ENCODE measurements at regions of chr14 and their contacts with region 1.

Region 1: DNA sequence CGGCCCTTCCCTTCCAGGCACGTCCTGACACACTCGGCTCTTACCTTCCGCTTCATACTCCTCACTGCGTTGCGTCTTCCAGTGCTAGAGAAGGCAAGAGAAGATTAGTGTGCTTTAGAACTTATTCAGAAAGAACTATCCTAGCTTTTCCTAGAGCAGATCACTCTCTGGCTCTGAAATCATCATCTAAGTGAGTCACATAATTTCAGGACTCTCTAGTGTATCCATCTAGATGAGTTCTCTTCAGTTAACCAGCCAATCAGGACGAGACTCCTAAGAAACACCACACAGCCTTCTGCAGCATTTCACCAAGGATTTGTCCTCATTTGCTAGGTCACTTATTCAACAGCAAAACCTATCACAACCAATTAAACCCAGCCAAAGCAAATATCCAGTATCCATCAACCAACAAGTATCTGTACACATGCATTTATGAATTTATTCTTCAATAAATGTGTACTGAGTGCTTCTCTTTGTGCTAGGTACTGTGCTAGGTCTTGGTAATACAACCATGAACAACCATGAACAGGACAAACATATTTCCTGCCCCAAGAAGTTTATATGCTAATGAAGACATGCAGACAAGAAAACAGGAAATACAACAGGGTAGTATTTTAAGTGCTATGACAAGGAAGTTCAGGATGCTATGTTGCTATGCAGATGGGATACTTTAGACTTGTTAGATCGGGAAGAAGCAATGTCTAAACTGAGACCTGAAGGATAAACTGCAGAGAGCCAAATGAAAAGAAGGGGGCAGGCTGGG is 52.1 kb downstream of the NIN start:
- DNase-seq: peak; percentile 18
- H3K4me3 ChIP-seq: no peak overlapping the region
- H3K27ac ChIP-seq: no peak overlapping the region
- H3K4me1 ChIP-seq: peaks cover 28% of the 10 kb centered on the region
- H3K27me3 ChIP-seq: no peaks in the 10 kb centered on the region
- CTCF ChIP-seq: no peak

Region 2: DNA sequence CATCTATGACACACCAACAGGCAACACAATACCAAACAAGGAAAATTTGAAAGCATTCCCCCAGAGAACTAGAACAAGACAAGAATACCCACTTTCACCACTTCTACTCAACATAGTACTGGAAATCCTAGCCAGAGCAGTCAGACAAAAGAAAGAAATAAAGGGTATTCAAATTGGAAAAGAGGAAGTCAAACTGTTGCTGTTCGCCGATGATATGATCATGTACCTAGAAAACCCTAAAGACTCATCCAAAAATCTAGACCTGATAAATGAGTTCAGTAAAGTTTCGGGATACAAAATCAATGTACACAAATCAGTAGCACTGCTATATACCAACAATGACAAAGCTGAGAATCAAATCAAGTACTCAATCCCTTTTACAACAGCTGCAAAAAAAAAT is 227.0 kb before region 1 on chr14:
- CTCF ChIA-PET with region 1: no interaction called
- dilution Hi-C with region 1: no loop called
- in situ Hi-C with region 1: no loop called
- intact Hi-C with region 1: no loop called
- DNase-seq: no peak
- H3K4me3 ChIP-seq: no peak overlapping the region
- H3K27ac ChIP-seq: no peak overlapping the region
- H3K4me1 ChIP-seq: no peaks in the 10 kb centered on the region
- H3K27me3 ChIP-seq: no peaks in the 10 kb centered on the region
- CTCF ChIP-seq: no peak

Region 3: GRCh38 chr14:50830932-50831725 is 52.2 kb after region 1 on chr14 and contains the start of gene NIN:
- CTCF ChIA-PET with region 1: no interaction called
- dilution Hi-C with region 1: no loop called
- in situ Hi-C with region 1: no loop called
- intact Hi-C with region 1: loop called (anchors 2 kb)
- DNase-seq: peak; percentile 82
- H3K4me3 ChIP-seq: peak within 1 kb of the TSS; percentile 78 to 83 (median 83)
- H3K27ac ChIP-seq: peak within 1 kb of the TSS; percentile 21
- H3K4me1 ChIP-seq: peaks cover 22% of the 10 kb centered on the region
- H3K27me3 ChIP-seq: no peaks in the 10 kb centered on the region
- CTCF ChIP-seq: no peak
- total RNA-seq, gene NIN: 20.7 to 40.2 TPM

Measured in mammary epithelial cell (primary cell).